Endothelial cell of umbilical vein (primary cell): ENCODE measurements at regions of chr3 and their contacts with region 1.

Region 1: DNA sequence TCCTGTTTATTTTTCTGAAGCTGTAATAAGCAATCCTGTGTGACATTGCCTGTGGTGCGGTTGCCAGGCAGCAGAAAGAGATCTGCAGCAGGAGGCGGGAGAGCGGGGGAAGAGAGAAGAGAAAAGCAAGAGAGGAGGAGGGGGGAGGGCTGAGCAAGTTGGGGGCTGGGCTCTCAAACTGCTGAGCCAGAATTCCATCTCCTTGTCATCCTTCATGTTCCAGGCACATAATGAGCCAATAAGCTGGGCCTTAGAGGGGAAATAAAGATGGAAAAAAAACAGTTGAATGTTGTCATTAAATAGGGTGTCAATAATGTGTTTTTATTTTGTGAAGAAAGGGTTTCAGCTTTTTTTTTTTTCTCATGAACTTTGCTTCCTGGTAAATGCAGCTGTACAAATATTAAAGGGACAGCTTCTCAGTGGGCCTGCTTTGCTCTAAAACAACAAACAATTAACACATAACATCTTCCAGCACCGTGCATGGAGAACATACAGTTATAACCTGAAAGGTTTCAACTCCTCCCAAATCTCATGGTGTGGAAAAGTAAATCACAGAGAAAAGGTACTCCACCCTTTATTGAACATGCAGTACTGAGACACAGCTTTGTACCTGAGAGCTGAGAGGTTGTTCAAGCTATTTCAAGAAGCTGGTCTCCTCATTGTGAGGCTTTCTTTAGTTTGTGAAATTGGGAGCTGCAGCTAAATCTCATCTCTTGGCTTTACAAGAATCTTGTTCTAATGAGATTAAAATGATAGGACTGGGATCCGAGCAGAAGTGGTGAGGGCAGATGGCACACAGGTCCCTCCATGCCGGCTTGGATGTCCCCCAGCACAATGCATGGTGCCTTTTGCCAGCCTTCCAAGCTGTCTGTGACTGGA is 451.1 kb upstream of the KCNMB2 start:
- DNase-seq: peak; percentile 86
- H3K4me3 ChIP-seq: no peak overlapping the region
- H3K27ac ChIP-seq: peak overlapping the region; percentile 8
- H3K4me1 ChIP-seq: peaks cover 24% of the 10 kb centered on the region
- H3K27me3 ChIP-seq: no peaks in the 10 kb centered on the region
- CTCF ChIP-seq: no peak
- POLR2A ChIP-seq: no peak

Region 2: DNA sequence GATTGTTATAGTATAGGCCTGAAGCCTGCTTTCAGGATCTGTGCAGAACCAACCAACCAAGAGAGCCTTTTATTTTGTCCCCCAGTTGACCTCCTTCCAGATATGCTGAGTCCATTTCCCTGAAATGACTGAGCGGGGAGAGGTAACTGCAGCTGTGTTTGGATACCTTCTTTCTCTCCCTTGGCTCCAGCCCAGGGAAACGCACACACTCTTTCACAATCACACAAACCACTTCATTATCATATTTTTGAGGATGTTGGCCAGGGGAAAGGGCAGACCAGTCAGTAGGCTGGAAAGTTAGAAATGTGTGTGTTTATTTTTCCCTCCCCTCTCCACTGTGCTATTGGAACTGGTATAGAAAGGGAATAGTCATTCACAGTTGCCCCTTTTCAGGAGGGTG is 470.2 kb before region 1 on chr3:
- CTCF ChIA-PET with region 1: no interaction called
- POLR2A ChIA-PET with region 1: no interaction called
- dilution Hi-C with region 1: no loop called
- intact Hi-C with region 1: loop called (anchors 10 kb)
- DNase-seq: peak; percentile 90
- H3K4me3 ChIP-seq: no peak overlapping the region
- H3K27ac ChIP-seq: no peak overlapping the region
- H3K4me1 ChIP-seq: peaks cover 14% of the 10 kb centered on the region
- H3K27me3 ChIP-seq: no peaks in the 10 kb centered on the region
- CTCF ChIP-seq: no peak
- POLR2A ChIP-seq: no peak